ENCODE measurements at regions of chr17 and their contacts with region 1.

Region 1: GRCh38 chr17:58577642-58578091 is 63.2 kb upstream of the MTMR4 start:
- DNase-seq: peak; percentile 30
- H3K4me3 ChIP-seq: no peak overlapping the region
- H3K27ac ChIP-seq: no peak overlapping the region
- H3K4me1 ChIP-seq: no peaks in the 10 kb centered on the region
- H3K27me3 ChIP-seq: peaks cover 0 to 3% of the 10 kb centered on the region in 2 experiments
- CTCF ChIP-seq: peak; percentile 66 to 75
- POLR2A ChIP-seq: no peak

Region 2: GRCh38 chr17:58587702-58588254 is 10.1 kb after region 1 on chr17:
- CTCF ChIA-PET with region 1: interaction called, 30 read pairs
- POLR2A ChIA-PET with region 1: no interaction called
- dilution Hi-C with region 1: no loop called
- intact Hi-C with region 1: no loop called
- DNase-seq: peak; percentile 68
- H3K4me3 ChIP-seq: no peak overlapping the region
- H3K27ac ChIP-seq: no peak overlapping the region
- H3K4me1 ChIP-seq: no peaks in the 10 kb centered on the region
- H3K27me3 ChIP-seq: peaks cover 3 to 7% of the 10 kb centered on the region in 2 experiments
- CTCF ChIP-seq: peak; percentile 92 to 95
- POLR2A ChIP-seq: no peak